GM13976 (cell line): ENCODE measurements at regions of chr1 and their contacts with region 1.

Region 1: GRCh38 chr1:54996359-54996868 is 2.3 kb upstream of the BSND start:
- DNase-seq: peak; percentile 95
- CTCF ChIP-seq: peak; percentile 91

Region 2: GRCh38 chr1:54950369-54951163 is 45.8 kb before region 1 on chr1:
- in situ Hi-C with region 1: loop called (anchors 5 kb)
- DNase-seq: peak; percentile 77
- CTCF ChIP-seq: peak; percentile 79